Activated CD8-positive, alpha-beta T cell treated with anti-CD3 and anti-CD28 coated beads, Interleukin-2, amount 10 ng/mL, durations not matched to agents 7 days and 5 days (primary cell): ENCODE measurements at regions of chr2 and their contacts with region 1.

Region 1: GRCh38 chr2:202265467-202266277 is at the start of gene NOP58:
- DNase-seq: peak; percentile 96
- ATAC-seq: peak; percentile 87
- H3K4me3 Mint-ChIP-seq: no peak within 1 kb of the TSS
- H3K27ac Mint-ChIP-seq: peak within 1 kb of the TSS; percentile 66
- H3K4me1 Mint-ChIP-seq: peaks cover 25% of the 10 kb centered on the region
- H3K27me3 Mint-ChIP-seq: no peaks in the 10 kb centered on the region
- total RNA-seq, gene NOP58: 120 to 122 TPM

Region 2: GRCh38 chr2:202238234-202239197 is 27.2 kb before region 1 on chr2 and contains the start of gene SUMO1:
- CTCF ChIA-PET with region 1: no interaction called
- POLR2A ChIA-PET with region 1: interaction called, 30 read pairs
- DNase-seq: peak; percentile 95
- ATAC-seq: peak; percentile 92
- H3K4me3 Mint-ChIP-seq: peak within 1 kb of the TSS; percentile 94
- H3K27ac Mint-ChIP-seq: peak within 1 kb of the TSS; percentile 98
- H3K4me1 Mint-ChIP-seq: peaks cover 32% of the 10 kb centered on the region
- H3K27me3 Mint-ChIP-seq: peaks cover 3% of the 10 kb centered on the region
- total RNA-seq, gene SUMO1: 98.2 to 99.2 TPM

Region 3: GRCh38 chr2:202278944-202279343 is 13.3 kb after region 1 on chr2:
- CTCF ChIA-PET with region 1: interaction called, 13 read pairs
- POLR2A ChIA-PET with region 1: interaction called, 45 read pairs
- DNase-seq: no peak
- ATAC-seq: no peak
- H3K4me3 Mint-ChIP-seq: no peak overlapping the region
- H3K27ac Mint-ChIP-seq: no peak overlapping the region
- H3K4me1 Mint-ChIP-seq: peaks cover 14% of the 10 kb centered on the region
- H3K27me3 Mint-ChIP-seq: no peaks in the 10 kb centered on the region